Transverse colon (tissue), 4 donors: ENCODE measurements at regions of chr20 and their contacts with region 1.

Region 1: DNA sequence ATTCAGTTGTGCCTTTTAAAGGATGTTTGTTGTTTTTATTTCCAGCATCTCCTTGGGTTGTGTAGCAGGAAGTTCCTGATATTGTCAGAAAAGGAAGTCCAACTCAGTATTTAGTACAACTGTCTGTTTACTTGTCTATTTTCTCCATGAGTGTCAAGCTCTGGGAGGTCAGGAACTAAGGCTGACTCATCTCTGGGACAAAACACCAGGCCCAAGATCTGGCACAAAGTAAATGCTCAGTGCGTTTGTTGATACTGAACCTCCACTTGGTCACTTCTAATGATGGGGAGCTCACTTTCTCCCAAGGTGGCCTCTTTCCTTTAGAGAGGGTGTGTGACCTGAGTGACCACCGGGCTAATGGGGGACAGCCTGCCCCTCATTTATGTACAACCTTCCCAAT is 12.6 kb upstream of the PIGU start:
- DNase-seq: no peak
- H3K4me3 ChIP-seq: no peak overlapping the region
- H3K27ac ChIP-seq: no peak overlapping the region
- H3K4me1 ChIP-seq: peaks cover 0 to 2% (median 0%) of the 10 kb centered on the region in 4 donors
- H3K27me3 ChIP-seq: no peaks in the 10 kb centered on the region
- CTCF ChIP-seq: no peak
- EP300 ChIP-seq: no peak
- POLR2A ChIP-seq: no peak

Region 2: GRCh38 chr20:34676642-34677373 is 12.7 kb before region 1 on chr20 and contains the start of gene PIGU:
- in situ Hi-C with region 1: no loop called
- intact Hi-C with region 1: loop called (anchors 1 kb)
- DNase-seq: peak; percentile 97
- H3K4me3 ChIP-seq: peak within 1 kb of the TSS; percentile 56 to 90 (median 74)
- H3K27ac ChIP-seq: peak within 1 kb of the TSS; percentile 77 to 92 (median 84)
- H3K4me1 ChIP-seq: peaks cover 5 to 22% (median 14%) of the 10 kb centered on the region in 4 donors
- H3K27me3 ChIP-seq: no peaks in the 10 kb centered on the region
- CTCF ChIP-seq: peak in 2 of 5 experiments; percentile 20 to 45
- EP300 ChIP-seq: no peak
- POLR2A ChIP-seq: peak; percentile 70
- total RNA-seq, gene PIGU: 4.1 to 28.7 (median 16.8) TPM

Region 3: GRCh38 chr20:35918021-35918420 is 1228.5 kb after region 1 on chr20:
- in situ Hi-C with region 1: no loop called
- intact Hi-C with region 1: no loop called
- DNase-seq: no peak
- H3K4me3 ChIP-seq: no peak overlapping the region
- H3K27ac ChIP-seq: no peak overlapping the region
- H3K4me1 ChIP-seq: no peaks in the 10 kb centered on the region
- H3K27me3 ChIP-seq: no peaks in the 10 kb centered on the region
- CTCF ChIP-seq: no peak
- EP300 ChIP-seq: no peak
- POLR2A ChIP-seq: no peak

Region 4: GRCh38 chr20:36499723-36500501 is 1810.4 kb after region 1 on chr20:
- in situ Hi-C with region 1: no loop called
- intact Hi-C with region 1: loop called (anchors 5 kb)
- DNase-seq: no peak
- H3K4me3 ChIP-seq: no peak overlapping the region
- H3K27ac ChIP-seq: no peak overlapping the region
- H3K4me1 ChIP-seq: no peaks in the 10 kb centered on the region
- H3K27me3 ChIP-seq: no peaks in the 10 kb centered on the region
- CTCF ChIP-seq: no peak
- EP300 ChIP-seq: no peak
- POLR2A ChIP-seq: no peak